Kidney (tissue), 22 donors: ENCODE measurements at regions of chr3 and their contacts with region 1.

Region 1: GRCh38 chr3:14791343-14791945 is 27.3 kb upstream of the FGD5 start:
- DNase-seq: peak in 4 of 5 donors; percentile 77 to 86 (median 82)
- H3K4me3 ChIP-seq: no peak overlapping the region
- H3K27ac ChIP-seq: no peak overlapping the region
- H3K4me1 ChIP-seq: peaks cover 0 to 17% (median 9%) of the 10 kb centered on the region in 3 donors
- H3K27me3 ChIP-seq: no peaks in the 10 kb centered on the region
- CTCF ChIP-seq: peak; percentile 85

Region 2: GRCh38 chr3:14915636-14916222 is 124.3 kb after region 1 on chr3:
- intact Hi-C with region 1: loop called (anchors 10 kb)
- DNase-seq: no peak
- H3K4me3 ChIP-seq: no peak overlapping the region
- H3K27ac ChIP-seq: no peak overlapping the region
- H3K4me1 ChIP-seq: peaks cover 0 to under 1% (median 0%) of the 10 kb centered on the region in 3 donors
- H3K27me3 ChIP-seq: no peaks in the 10 kb centered on the region
- CTCF ChIP-seq: peak; percentile 5